Esophagus squamous epithelium (tissue), 5 donors: ENCODE measurements at regions of chr11 and their contacts with region 1.

Region 1: DNA sequence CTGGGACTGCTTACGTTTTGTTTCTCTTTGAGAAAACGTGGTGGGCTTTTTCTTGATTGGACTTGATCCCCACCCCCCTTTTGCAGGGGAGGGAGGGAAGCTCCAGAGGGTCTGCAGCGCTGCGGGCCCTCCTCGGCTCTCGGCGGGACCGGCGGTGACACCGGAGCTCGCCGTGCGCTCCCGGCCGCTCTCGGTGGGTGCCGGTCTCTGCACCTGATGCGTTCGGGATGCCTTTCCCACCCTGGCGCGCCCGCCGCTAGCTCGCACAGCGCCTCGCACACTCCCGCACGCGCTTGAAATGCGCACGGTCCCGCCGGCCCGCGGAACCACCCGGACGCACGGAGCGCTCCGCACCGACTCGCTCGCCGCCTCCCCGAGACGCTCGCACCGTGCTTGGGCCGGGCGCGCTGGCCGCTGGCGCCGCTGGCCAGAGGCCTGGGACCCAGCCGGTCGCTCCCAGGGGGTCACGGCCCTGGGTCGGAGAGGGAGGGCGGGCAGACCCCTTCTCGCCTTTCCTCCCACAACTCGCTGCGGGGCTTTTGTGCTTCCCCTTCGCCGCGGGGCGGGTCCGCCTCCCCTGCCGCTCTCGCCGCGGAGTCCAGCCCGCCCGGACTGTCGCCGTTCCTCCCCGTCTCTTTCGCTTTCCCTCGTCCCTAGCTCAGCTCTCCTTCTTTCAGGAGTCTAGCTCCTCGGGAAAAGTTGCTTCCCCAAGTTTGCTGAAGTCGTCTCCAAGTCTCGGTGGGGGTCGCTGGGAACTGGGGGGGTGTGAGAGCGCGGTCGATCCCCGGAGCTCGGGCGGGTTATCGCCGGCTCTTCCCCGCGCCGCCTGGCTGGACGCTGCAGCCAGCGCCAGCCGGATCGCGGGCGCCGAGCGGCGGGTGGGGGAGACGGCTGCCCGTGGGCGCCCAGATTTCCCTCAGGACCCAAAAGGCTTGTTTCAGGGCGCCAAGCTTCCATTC is 1.2 kb downstream of the ZBTB16 start:
- DNase-seq: no peak
- H3K4me3 ChIP-seq: peak overlapping the region; percentile 68 to 96 (median 94)
- H3K27ac ChIP-seq: peak overlapping the region; percentile 89 to 97 (median 96)
- H3K4me1 ChIP-seq: peaks cover 9 to 85% (median 12%) of the 10 kb centered on the region in 3 donors
- H3K27me3 ChIP-seq: peaks cover 0 to 70% (median 0%) of the 10 kb centered on the region in 4 donors
- CTCF ChIP-seq: peak in 1 of 6 experiments; percentile 4
- POLR2A ChIP-seq: peak in 1 of 4 donors; percentile 2

Region 2: GRCh38 chr11:113934761-113935160 is 125.9 kb before region 1 on chr11:
- intact Hi-C with region 1: no loop called
- DNase-seq: no peak
- H3K4me3 ChIP-seq: no peak overlapping the region
- H3K27ac ChIP-seq: no peak overlapping the region
- H3K4me1 ChIP-seq: no peaks in the 10 kb centered on the region
- H3K27me3 ChIP-seq: peaks cover 0 to 18% (median 0%) of the 10 kb centered on the region in 4 donors
- CTCF ChIP-seq: no peak
- POLR2A ChIP-seq: no peak

Region 3: GRCh38 chr11:113952588-113952987 is 108.1 kb before region 1 on chr11:
- intact Hi-C with region 1: no loop called
- DNase-seq: no peak
- H3K4me3 ChIP-seq: no peak overlapping the region
- H3K27ac ChIP-seq: no peak overlapping the region
- H3K4me1 ChIP-seq: no peaks in the 10 kb centered on the region
- H3K27me3 ChIP-seq: peaks cover 0 to 45% (median 0%) of the 10 kb centered on the region in 4 donors
- CTCF ChIP-seq: no peak
- POLR2A ChIP-seq: no peak

Region 4: GRCh38 chr11:114197799-114198500 is 137.3 kb after region 1 on chr11:
- intact Hi-C with region 1: loop called (anchors 10 kb)
- DNase-seq: no peak
- H3K4me3 ChIP-seq: peak overlapping the region in 1 of 4 donors; percentile 14
- H3K27ac ChIP-seq: peak overlapping the region; percentile 79 to 93 (median 92)
- H3K4me1 ChIP-seq: peaks cover 34 to 95% (median 66%) of the 10 kb centered on the region in 3 donors
- H3K27me3 ChIP-seq: no peaks in the 10 kb centered on the region
- CTCF ChIP-seq: peak in 1 of 6 experiments; percentile 12
- POLR2A ChIP-seq: peak in 1 of 4 donors; percentile 35

Region 5: GRCh38 chr11:114250993-114251814 is 190.5 kb after region 1 on chr11:
- intact Hi-C with region 1: loop called (anchors 5 kb)
- DNase-seq: no peak
- H3K4me3 ChIP-seq: no peak overlapping the region
- H3K27ac ChIP-seq: peak overlapping the region in 3 of 4 donors; percentile 43 to 69 (median 69)
- H3K4me1 ChIP-seq: peaks cover 0 to 34% (median 5%) of the 10 kb centered on the region in 3 donors
- H3K27me3 ChIP-seq: no peaks in the 10 kb centered on the region
- CTCF ChIP-seq: no peak
- POLR2A ChIP-seq: no peak